ENCODE measurements at regions of chr1 and their contacts with region 1.

Region 1: DNA sequence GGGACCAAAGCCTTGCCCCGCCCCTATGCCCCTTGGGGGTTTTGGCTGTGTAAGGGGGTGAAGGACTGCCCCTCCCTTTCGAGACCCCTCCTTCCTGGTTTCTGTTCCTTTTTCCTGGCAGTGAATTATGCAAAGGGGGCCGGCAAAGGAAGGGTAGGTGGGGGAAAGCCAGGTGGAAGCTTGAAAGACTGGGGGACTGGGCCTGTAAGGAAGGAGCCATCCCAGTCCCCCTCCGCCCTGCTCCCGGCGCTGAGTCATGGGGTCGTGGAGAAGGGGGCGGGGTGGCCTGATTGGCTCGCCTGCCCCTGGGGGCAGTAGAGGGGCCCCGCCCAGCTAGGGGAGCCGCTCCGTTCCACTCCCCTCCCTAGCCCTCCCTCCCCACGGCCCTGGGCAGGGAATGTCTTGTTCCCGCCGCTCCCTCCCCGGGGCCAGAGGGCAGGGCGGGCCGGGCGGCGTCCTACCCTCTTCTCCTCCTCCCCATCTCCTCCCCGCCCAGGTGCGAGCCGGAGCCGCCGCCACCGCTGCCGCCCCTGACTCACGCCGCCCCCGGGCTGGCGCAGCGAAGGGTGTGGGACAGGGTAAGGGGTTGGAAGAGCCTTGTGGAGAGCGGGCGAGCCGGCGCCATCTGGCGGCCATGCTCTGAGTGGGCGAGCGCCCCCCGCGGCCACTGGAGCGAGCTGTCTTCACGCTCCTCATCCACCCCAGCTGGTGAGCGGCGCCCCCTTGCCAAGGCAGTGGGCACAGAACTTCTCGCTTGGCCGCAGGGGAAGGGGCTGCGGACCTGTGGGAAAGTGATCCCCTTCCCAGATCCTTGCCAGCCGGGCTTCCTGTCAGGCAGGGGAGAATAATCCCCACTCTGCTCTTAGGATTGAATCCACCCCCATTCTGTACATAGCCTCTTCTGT is 14.7 kb downstream of the ZBTB7B start:
- DNase-seq: peak; percentile 94
- ATAC-seq: peak; percentile 93
- H3K4me3 Mint-ChIP-seq: peak overlapping the region; percentile 51
- H3K27ac Mint-ChIP-seq: peak overlapping the region; percentile 60
- H3K4me1 Mint-ChIP-seq: peaks cover 51% of the 10 kb centered on the region
- H3K27me3 Mint-ChIP-seq: peaks cover 4% of the 10 kb centered on the region
- CTCF ChIP-seq: peak; percentile 97

Region 2: DNA sequence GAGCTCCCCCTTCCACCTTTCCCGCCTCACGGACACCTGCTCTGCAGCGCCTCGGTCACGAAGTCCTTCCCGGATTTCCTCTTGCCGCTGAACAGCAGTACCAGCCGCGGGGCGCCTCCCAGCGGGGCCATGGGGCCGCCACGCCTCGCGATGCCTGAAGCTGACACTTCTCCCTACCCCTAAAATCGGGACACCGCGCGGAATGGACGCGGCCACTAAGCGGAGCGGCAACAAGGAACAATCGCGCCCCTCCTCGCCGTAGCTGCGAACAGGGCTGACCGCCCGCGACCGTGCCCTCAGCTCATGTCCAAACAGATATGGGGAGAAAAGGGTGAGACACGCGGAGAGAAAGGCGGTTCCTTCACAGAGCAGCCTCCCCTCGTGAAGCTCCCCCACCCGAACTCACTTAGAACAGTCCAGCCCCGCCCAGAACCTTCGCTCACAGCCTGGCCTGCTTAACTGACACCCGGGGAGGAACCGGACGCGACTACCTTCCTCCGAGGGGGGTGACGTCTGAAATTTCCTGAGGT is 80.7 kb before region 1 on chr1 and contains the start of gene PMVK:
- CTCF ChIA-PET with region 1: interaction called, 11 read pairs
- POLR2A ChIA-PET with region 1: interaction called, 3 read pairs
- intact Hi-C with region 1: no loop called
- DNase-seq: peak; percentile 97
- ATAC-seq: peak; percentile 90
- H3K4me3 Mint-ChIP-seq: peak within 1 kb of the TSS; percentile 88
- H3K27ac Mint-ChIP-seq: peak within 1 kb of the TSS; percentile 98
- H3K4me1 Mint-ChIP-seq: peaks cover 49% of the 10 kb centered on the region
- H3K27me3 Mint-ChIP-seq: no peaks in the 10 kb centered on the region
- CTCF ChIP-seq: no peak
- total RNA-seq, gene PMVK: 32.3 to 33.2 TPM

Region 3: DNA sequence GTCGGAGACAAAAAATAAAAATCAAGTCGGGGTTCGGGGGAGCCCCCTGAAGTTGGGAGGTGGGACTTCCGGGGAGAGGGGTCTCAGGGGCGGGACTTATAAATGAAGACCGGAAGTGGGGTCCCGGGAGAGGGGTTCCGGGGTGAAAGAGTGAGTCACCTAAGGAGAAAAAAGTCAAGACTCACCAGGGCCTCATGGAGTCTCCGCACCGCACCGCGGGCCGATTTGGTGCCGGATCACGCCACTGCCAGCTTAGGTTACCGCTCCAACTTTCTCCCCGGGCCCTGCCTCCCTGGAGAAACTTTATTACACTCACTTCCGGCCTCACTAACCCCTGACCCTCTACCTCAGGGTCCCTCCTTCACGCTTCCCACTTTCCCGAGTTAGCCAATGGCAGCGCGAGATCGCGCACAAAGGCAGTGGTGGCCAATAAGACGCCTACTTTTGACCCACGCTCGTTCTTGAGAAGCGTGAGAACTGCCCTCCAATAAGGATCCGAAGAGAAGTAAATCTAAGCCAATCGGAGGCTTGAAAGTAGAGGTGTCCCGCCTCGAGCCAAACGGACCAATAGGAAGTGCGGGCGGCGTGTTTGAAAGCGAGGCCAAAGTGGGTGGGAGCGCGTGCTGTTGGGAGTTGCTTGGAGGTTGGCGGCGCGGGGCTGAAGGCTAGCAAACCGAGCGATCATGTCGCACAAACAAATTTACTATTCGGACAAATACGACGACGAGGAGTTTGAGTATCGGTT is 43.1 kb before region 1 on chr1 and contains the start of gene CKS1B:
- CTCF ChIA-PET with region 1: interaction called, 7 read pairs
- POLR2A ChIA-PET with region 1: interaction called, 10 read pairs
- intact Hi-C with region 1: loop called (anchors 5 kb)
- DNase-seq: peak; percentile 99
- ATAC-seq: peak; percentile 87
- H3K4me3 Mint-ChIP-seq: no peak within 1 kb of the TSS
- H3K27ac Mint-ChIP-seq: no peak within 1 kb of the TSS
- H3K4me1 Mint-ChIP-seq: peaks cover 30% of the 10 kb centered on the region
- H3K27me3 Mint-ChIP-seq: no peaks in the 10 kb centered on the region
- CTCF ChIP-seq: no peak
- total RNA-seq, gene CKS1B: 172 to 173 TPM

Region 4: GRCh38 chr1:154992721-154993571 is 24.3 kb before region 1 on chr1:
- CTCF ChIA-PET with region 1: interaction called, 77 read pairs
- POLR2A ChIA-PET with region 1: interaction called, 29 read pairs
- intact Hi-C with region 1: no loop called
- DNase-seq: no peak
- ATAC-seq: no peak
- H3K4me3 Mint-ChIP-seq: no peak overlapping the region
- H3K27ac Mint-ChIP-seq: no peak overlapping the region
- H3K4me1 Mint-ChIP-seq: peaks cover 29% of the 10 kb centered on the region
- H3K27me3 Mint-ChIP-seq: no peaks in the 10 kb centered on the region
- CTCF ChIP-seq: no peak

Region 5: DNA sequence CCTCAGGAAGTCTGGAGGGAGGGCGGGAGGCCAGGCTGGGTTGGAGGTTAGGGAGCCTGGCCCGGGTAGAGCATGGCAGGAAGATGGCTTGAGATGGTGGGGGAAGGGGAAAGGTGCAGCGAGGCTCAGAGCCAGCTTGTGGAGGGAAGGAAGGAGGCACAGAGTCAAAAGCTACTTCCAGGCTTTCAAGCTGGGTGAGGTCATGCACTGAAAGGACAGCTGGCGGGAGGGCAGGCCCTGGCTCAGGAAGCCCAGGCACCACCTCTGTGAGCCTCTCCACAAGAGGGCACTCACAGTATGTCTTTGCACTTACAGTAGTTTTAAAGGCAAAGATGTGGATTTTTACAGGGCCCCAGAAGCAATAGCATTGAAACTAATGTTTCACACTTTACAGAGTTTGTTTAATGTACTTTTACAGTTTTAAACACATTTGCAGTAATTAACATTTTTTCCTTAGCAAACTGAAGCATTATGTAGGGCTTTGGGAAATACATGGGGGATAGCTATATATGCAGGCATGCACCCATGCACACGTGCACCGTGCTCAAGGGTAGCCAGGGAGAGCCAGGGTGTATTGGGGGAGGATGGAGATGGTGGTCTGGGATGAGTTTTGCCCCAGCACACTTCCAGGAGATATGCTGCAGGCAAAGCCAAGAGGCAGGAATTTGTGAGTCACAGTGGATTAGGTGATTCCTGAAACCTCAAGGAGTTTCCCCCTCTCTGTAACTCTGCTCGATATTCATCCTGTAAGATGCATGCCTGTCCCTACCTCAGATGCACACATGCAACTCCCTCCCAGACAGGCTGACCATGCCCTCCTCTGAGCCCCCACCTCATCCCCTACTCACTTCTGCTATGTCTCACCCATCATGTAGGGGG is 27.8 kb after region 1 on chr1:
- CTCF ChIA-PET with region 1: interaction called, 38 read pairs
- POLR2A ChIA-PET with region 1: interaction called, 7 read pairs
- intact Hi-C with region 1: no loop called
- DNase-seq: peak; percentile 82
- ATAC-seq: peak; percentile 98
- H3K4me3 Mint-ChIP-seq: no peak overlapping the region
- H3K27ac Mint-ChIP-seq: peak overlapping the region; percentile 10
- H3K4me1 Mint-ChIP-seq: peaks cover 5% of the 10 kb centered on the region
- H3K27me3 Mint-ChIP-seq: peaks cover 2% of the 10 kb centered on the region
- CTCF ChIP-seq: peak; percentile 60

Region 6: DNA sequence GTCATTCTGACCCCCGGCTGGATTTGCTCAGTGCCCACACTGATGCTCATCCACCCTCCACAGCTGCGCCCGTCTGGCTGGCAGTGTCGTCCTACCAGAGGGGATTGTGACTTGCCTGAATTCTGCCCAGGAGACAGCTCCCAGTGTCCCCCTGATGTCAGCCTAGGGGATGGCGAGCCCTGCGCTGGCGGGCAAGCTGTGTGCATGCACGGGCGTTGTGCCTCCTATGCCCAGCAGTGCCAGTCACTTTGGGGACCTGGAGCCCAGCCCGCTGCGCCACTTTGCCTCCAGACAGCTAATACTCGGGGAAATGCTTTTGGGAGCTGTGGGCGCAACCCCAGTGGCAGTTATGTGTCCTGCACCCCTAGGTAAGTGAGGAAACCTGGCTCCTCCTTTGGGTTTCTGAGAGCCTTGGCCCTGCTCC is 40.5 kb after region 1 on chr1:
- CTCF ChIA-PET with region 1: interaction called, 10 read pairs
- POLR2A ChIA-PET with region 1: no interaction called
- intact Hi-C with region 1: no loop called
- DNase-seq: no peak
- ATAC-seq: no peak
- H3K4me3 Mint-ChIP-seq: no peak overlapping the region
- H3K27ac Mint-ChIP-seq: no peak overlapping the region
- H3K4me1 Mint-ChIP-seq: peaks cover 19% of the 10 kb centered on the region
- H3K27me3 Mint-ChIP-seq: no peaks in the 10 kb centered on the region
- CTCF ChIP-seq: no peak

Region 7: GRCh38 chr1:155553349-155553748 is 536.1 kb after region 1 on chr1:
- CTCF ChIA-PET with region 1: no interaction called
- POLR2A ChIA-PET with region 1: no interaction called
- intact Hi-C with region 1: no loop called
- DNase-seq: no peak
- ATAC-seq: peak; percentile 20
- H3K4me3 Mint-ChIP-seq: no peak overlapping the region
- H3K27ac Mint-ChIP-seq: peak overlapping the region; percentile 56
- H3K4me1 Mint-ChIP-seq: peaks cover 43% of the 10 kb centered on the region
- H3K27me3 Mint-ChIP-seq: no peaks in the 10 kb centered on the region
- CTCF ChIP-seq: no peak